ENCODE measurements at regions of chr1 and their contacts with region 1.

Region 1: GRCh38 chr1:197374428-197374827 is 106.4 kb downstream of the CRB1 start:
- DNase-seq: no peak
- ATAC-seq: peak in 1 of 4 experiments; percentile 35
- H3K4me3 ChIP-seq: no peak overlapping the region
- H3K4me3 Mint-ChIP-seq: no peak overlapping the region
- H3K27ac ChIP-seq: no peak overlapping the region
- H3K27ac Mint-ChIP-seq: no peak overlapping the region
- H3K4me1 ChIP-seq: no peaks in the 10 kb centered on the region
- H3K4me1 Mint-ChIP-seq: peaks cover 0 to 7% (median 3%) of the 10 kb centered on the region in 3 donors
- H3K27me3 ChIP-seq: no peaks in the 10 kb centered on the region
- H3K27me3 Mint-ChIP-seq: no peaks in the 10 kb centered on the region

Region 2: DNA sequence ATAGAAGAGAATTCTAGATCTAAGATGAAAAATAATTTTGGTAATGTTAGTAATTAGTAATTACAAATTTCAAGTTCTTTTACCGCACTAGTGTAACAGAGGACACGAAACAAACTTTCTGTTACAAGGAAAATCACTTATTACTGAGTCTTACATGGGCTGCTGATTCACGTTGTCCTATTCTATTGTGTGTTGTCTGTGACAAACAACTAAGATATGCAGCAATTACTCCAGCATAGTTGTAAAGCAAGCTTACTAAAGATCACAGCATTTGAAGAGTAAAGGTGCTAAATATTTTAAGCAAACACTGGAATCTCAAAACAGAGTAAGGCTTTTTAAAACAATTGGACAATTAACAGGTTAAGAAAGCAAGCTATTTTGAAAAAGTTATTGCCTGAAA is 1268.5 kb before region 1 on chr1:
- CTCF ChIA-PET with region 1: no interaction called
- POLR2A ChIA-PET with region 1: no interaction called
- DNase-seq: no peak
- ATAC-seq: no peak
- H3K4me3 ChIP-seq: no peak overlapping the region
- H3K4me3 Mint-ChIP-seq: no peak overlapping the region
- H3K27ac ChIP-seq: no peak overlapping the region
- H3K27ac Mint-ChIP-seq: no peak overlapping the region
- H3K4me1 ChIP-seq: no peaks in the 10 kb centered on the region
- H3K4me1 Mint-ChIP-seq: no peaks in the 10 kb centered on the region
- H3K27me3 ChIP-seq: no peaks in the 10 kb centered on the region
- H3K27me3 Mint-ChIP-seq: no peaks in the 10 kb centered on the region

Region 3: DNA sequence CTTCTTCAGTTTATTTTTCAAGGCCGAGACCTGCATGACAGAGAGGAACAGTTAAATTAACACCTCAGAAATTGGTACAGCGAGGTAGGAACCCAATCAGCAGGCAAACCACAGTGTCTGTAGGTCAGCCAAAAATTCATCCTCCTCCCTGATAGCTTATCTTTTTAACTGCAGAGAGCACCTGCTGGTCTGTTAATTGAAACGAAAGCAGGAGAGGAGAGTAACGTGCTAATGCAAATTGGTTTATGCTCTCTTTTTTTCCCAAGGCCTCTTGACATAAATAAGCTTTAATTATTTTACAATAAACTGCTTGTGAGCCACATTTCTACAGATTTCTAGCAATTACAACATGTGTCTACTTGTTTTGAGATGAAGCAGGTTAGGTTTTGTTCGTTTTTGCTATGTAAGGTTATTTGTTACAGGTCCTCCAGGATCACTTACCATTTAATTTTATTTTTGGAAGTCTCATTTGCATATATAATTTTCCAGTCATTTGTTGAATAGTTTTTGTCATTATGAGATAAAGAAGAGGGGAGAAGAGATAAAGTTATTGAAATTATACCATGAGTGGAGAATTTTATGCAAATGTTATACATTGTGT is 221.0 kb after region 1 on chr1:
- CTCF ChIA-PET with region 1: interaction called in 1 of 2 experiments, 11 read pairs
- POLR2A ChIA-PET with region 1: no interaction called
- DNase-seq: no peak
- ATAC-seq: no peak
- H3K4me3 ChIP-seq: no peak overlapping the region
- H3K4me3 Mint-ChIP-seq: no peak overlapping the region
- H3K27ac ChIP-seq: no peak overlapping the region
- H3K27ac Mint-ChIP-seq: no peak overlapping the region
- H3K4me1 ChIP-seq: no peaks in the 10 kb centered on the region
- H3K4me1 Mint-ChIP-seq: peaks cover 0 to 3% (median 0%) of the 10 kb centered on the region in 3 donors
- H3K27me3 ChIP-seq: no peaks in the 10 kb centered on the region
- H3K27me3 Mint-ChIP-seq: no peaks in the 10 kb centered on the region

Region 4: GRCh38 chr1:198318085-198318484 is 943.7 kb after region 1 on chr1:
- CTCF ChIA-PET with region 1: no interaction called
- POLR2A ChIA-PET with region 1: no interaction called
- DNase-seq: no peak
- ATAC-seq: no peak
- H3K4me3 ChIP-seq: no peak overlapping the region
- H3K4me3 Mint-ChIP-seq: no peak overlapping the region
- H3K27ac ChIP-seq: no peak overlapping the region
- H3K27ac Mint-ChIP-seq: no peak overlapping the region
- H3K4me1 ChIP-seq: no peaks in the 10 kb centered on the region
- H3K4me1 Mint-ChIP-seq: peaks cover 18 to 26% (median 24%) of the 10 kb centered on the region in 3 donors
- H3K27me3 ChIP-seq: no peaks in the 10 kb centered on the region
- H3K27me3 Mint-ChIP-seq: no peaks in the 10 kb centered on the region